Activated naive CD4-positive, alpha-beta T cell treated with anti-CD3 and anti-CD28 coated beads for 36 hours (primary cell): ENCODE measurements at regions of chr1 and their contacts with region 1.

Region 1: DNA sequence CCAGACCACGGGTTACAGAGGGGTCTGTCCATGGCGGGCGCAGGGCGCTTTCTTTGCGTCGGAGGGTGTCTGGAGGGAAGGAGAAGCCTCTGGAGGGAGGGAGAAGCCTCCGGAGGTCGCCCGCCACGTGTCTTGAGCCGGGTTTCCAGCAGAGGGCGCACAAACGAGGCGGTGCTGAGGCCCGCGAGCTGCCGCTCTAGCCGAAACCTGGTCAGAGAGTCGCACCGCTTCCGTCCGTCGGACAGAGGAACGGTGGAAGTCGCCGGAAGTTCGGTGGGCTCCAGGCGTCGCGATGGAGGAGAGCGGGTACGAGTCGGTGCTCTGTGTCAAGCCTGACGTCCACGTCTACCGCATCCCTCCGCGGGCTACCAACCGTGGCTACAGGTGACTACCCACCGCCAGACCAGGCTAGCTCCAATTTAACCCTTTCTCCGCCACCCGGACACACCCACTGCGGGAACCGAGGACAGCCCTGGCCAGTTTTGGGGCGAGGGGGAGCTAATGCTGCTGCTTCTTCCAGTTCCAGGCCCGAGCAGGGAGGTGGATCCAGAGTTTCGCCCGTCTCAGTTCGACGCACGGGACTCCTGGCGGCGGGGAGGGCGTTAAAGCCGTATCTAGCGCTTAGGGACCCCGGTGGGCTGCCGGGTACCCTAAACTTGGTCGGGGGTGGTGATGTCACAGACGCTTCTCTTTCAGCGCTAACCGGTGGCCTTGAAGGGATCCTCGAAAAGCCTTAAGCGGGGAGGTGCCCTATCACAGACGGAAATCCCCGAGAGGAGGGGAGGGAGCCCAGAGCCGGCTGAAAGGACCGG is at the start of gene NECAP2:
- DNase-seq: peak; percentile 97
- H3K4me3 Mint-ChIP-seq: peak within 1 kb of the TSS; percentile 86
- H3K27ac Mint-ChIP-seq: peak within 1 kb of the TSS; percentile 90
- H3K4me1 Mint-ChIP-seq: peaks cover 36% of the 10 kb centered on the region
- H3K27me3 Mint-ChIP-seq: no peaks in the 10 kb centered on the region
- total RNA-seq, gene NECAP2: 53.3 to 53.4 TPM

Region 2: GRCh38 chr1:16386454-16387113 is 54.1 kb before region 1 on chr1:
- CTCF ChIA-PET with region 1: interaction called, 4 read pairs
- intact Hi-C with region 1: loop called (anchors 5 kb)
- DNase-seq: no peak
- H3K4me3 Mint-ChIP-seq: peak overlapping the region; percentile 28
- H3K27ac Mint-ChIP-seq: peak overlapping the region; percentile 62
- H3K4me1 Mint-ChIP-seq: peaks cover 74% of the 10 kb centered on the region
- H3K27me3 Mint-ChIP-seq: no peaks in the 10 kb centered on the region

Region 3: DNA sequence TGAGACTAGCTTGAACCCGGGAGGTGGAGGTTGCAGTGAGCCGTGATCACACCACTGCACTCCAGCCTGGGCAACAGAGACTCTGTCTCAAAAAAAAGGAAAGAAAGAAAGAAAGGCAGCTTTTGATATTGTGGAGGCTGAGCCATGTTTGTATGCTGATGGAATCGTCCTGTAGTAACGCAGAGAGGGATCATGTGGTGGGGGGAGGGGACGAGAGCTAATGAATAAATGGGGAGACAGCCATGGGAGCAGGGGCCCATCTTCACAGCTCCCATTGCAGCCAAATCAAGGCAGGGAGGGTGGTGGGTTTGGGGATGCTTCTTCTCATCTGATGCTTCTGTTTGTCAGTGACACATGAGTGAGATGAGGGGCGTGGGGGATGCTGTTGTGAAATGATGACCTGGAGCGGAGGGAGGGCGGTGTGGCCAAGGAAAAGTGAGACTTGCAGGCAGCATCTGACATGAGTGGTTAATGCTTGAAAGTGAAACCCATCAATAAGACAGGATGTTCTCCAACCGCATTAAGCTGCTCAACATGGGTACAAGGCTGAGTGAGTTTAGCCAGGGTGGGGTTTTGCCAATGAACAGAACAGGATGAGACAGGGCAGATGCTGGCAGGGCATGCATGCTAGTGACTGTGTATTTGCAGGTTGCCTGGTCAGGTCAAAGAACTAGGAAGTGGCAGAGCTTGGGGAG is 20.1 kb before region 1 on chr1:
- CTCF ChIA-PET with region 1: interaction called, 12 read pairs
- intact Hi-C with region 1: loop called (anchors 2 kb)
- DNase-seq: peak; percentile 87
- H3K4me3 Mint-ChIP-seq: peak overlapping the region; percentile 10
- H3K27ac Mint-ChIP-seq: peak overlapping the region; percentile 67
- H3K4me1 Mint-ChIP-seq: peaks cover 30% of the 10 kb centered on the region
- H3K27me3 Mint-ChIP-seq: no peaks in the 10 kb centered on the region

Region 4: GRCh38 chr1:16451841-16452528 is 11.3 kb after region 1 on chr1:
- CTCF ChIA-PET with region 1: interaction called, 11 read pairs
- intact Hi-C with region 1: no loop called
- DNase-seq: no peak
- H3K4me3 Mint-ChIP-seq: no peak overlapping the region
- H3K27ac Mint-ChIP-seq: peak overlapping the region; percentile 64
- H3K4me1 Mint-ChIP-seq: peaks cover 38% of the 10 kb centered on the region
- H3K27me3 Mint-ChIP-seq: no peaks in the 10 kb centered on the region

Region 5: DNA sequence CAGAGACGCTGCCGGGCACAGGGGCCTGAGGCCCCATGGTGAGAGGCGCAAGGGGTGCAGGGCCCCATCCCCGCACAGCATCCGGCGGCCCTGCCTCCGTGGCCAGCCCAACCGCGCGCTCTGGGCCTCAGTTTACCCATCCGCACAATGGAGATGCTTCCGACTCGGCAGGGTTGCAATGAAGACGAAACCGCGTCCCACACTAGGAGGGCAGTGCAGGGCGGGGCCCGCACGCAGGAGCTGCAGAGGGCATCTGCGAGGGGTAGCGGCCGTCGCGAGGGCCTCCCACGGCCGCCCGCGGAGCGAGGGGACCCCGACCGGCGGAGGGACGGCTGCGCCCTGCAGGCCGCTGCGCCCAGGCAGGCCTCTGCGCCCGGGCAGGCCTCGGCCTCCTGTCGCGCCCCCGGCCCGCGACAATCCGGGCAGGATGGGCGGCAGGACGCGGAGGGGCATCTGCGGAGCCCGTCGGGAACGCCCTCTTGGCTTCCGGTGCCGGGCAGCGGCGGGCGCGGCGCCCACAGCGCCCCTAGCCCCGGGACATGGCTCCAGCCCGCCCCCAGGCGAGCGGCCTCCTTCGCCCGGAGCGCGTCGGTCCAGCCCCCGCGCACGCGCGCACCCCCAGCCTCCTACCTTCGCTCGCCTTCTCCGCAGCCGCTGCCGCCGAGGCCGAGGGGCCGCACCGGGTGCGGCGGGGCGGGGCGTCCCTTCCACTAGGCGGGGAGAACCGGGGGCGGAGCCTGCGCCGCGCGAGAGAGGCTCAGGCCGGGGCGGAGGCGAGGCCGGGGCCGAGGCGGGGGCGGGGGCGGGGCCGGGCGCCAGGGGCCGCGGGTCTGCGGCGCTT is 58.1 kb after region 1 on chr1:
- CTCF ChIA-PET with region 1: no interaction called
- intact Hi-C with region 1: loop called (anchors 5 kb)
- DNase-seq: peak; percentile 88
- H3K4me3 Mint-ChIP-seq: peak overlapping the region; percentile 77
- H3K27ac Mint-ChIP-seq: no peak overlapping the region
- H3K4me1 Mint-ChIP-seq: peaks cover 13% of the 10 kb centered on the region
- H3K27me3 Mint-ChIP-seq: no peaks in the 10 kb centered on the region

Region 6: DNA sequence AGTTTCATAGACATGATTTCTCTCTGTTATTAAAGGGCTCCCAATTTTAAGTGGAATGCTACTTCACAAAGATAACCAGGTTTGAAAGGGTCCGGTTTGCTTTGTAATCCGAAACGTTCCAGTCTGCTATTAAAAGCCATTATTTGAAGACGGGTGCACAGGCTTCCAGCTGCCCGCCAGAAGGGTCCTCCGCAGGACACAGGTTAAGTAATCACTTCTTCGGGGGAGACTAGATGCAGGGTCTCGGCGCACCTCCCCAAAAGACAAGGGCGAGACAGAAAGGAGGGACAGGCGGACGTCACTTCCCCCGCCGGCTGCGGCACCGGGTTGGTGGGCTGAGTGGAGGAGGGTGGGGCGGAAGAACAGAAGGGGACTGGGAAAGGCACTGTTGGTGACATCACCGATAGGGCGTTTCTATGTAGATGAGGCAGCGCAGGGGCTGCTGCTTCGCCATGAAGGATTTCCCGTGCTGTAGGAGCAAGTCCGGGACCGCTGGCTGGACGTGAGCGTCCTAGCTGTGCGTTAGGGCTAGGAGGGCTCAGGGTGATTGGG is 464.0 kb after region 1 on chr1:
- CTCF ChIA-PET with region 1: no interaction called
- intact Hi-C with region 1: loop called (anchors 5 kb)
- DNase-seq: peak; percentile 100
- H3K4me3 Mint-ChIP-seq: no peak overlapping the region
- H3K27ac Mint-ChIP-seq: no peak overlapping the region
- H3K4me1 Mint-ChIP-seq: peaks cover 32% of the 10 kb centered on the region
- H3K27me3 Mint-ChIP-seq: no peaks in the 10 kb centered on the region